ENCODE measurements at regions of chr11 and their contacts with region 1.

Region 1: GRCh38 chr11:72793425-72794367 is at the start of gene STARD10:
- DNase-seq: peak; percentile 89 to 92
- ATAC-seq: peak; percentile 92 to 93
- H3K4me3 ChIP-seq: peak within 1 kb of the TSS; percentile 64 to 86 (median 75)
- H3K27ac ChIP-seq: peak within 1 kb of the TSS; percentile 87 to 98 (median 96)
- H3K4me1 ChIP-seq: peaks cover 20 to 29% of the 10 kb centered on the region in 2 donors
- H3K27me3 ChIP-seq: no peaks in the 10 kb centered on the region
- CTCF ChIP-seq: peak; percentile 98 to 100 (median 99)
- POLR2A ChIP-seq: peak in 1 of 2 donors; percentile 69
- total RNA-seq, gene STARD10: 39.1 to 103 (median 71.1) TPM

Region 2: GRCh38 chr11:72752088-72752914 is 41.4 kb before region 1 on chr11 and contains the start of gene ARAP1:
- in situ Hi-C with region 1: no loop called
- intact Hi-C with region 1: loop called (anchors 1 kb)
- DNase-seq: peak; percentile 46 to 66
- ATAC-seq: peak; percentile 86 to 87
- H3K4me3 ChIP-seq: peak within 1 kb of the TSS; percentile 64 to 78 (median 70)
- H3K27ac ChIP-seq: peak within 1 kb of the TSS; percentile 53 to 83 (median 76)
- H3K4me1 ChIP-seq: peaks cover 12 to 18% of the 10 kb centered on the region in 2 donors
- H3K27me3 ChIP-seq: no peaks in the 10 kb centered on the region
- CTCF ChIP-seq: no peak
- POLR2A ChIP-seq: peak in 1 of 2 donors; percentile 37
- total RNA-seq, gene ARAP1: 18.3 to 52.0 (median 26.0) TPM

Region 3: GRCh38 chr11:72772978-72773690 is 20.6 kb before region 1 on chr11:
- in situ Hi-C with region 1: no loop called
- intact Hi-C with region 1: loop called (anchors 1 kb)
- DNase-seq: peak; percentile 59 to 78
- ATAC-seq: peak; percentile 96 to 98
- H3K4me3 ChIP-seq: no peak overlapping the region
- H3K27ac ChIP-seq: peak overlapping the region; percentile 66 to 80 (median 76)
- H3K4me1 ChIP-seq: peaks cover 24 to 26% of the 10 kb centered on the region in 2 donors
- H3K27me3 ChIP-seq: no peaks in the 10 kb centered on the region
- CTCF ChIP-seq: no peak
- POLR2A ChIP-seq: no peak

Region 4: DNA sequence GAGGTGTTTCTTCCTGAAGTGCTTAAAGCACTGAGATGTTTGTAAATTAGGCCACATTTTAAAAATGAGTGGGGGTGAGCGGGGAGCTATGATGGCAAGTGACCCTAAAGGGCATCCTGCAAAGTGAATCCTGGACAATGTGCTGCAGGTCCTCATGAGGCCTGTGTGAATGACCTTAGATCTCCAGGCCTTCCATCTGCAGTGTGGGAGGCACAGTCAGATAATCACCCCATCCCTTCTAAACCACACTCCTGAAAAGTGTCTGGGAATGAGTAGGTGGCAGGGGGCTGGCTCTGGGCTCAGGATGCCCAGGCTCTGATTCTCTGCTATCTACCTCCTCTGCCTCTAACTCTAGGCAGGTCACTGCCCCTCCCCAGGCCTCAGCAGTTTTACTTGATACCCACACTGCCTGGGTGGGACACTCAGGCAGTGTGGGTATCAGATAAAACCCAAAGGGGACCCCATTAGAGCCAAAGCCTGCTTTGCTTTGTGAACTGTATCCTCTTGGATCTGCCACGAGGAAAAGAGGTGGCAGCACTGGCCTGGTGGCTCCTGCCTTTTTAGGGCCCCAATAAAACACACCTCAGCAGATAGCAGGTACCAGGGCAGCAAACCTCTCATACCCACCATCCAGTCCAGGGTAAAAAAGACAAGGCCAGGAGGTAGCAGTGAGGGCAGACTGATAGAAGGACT is 10.4 kb before region 1 on chr11:
- in situ Hi-C with region 1: no loop called
- intact Hi-C with region 1: no loop called
- DNase-seq: no peak
- ATAC-seq: no peak
- H3K4me3 ChIP-seq: no peak overlapping the region
- H3K27ac ChIP-seq: no peak overlapping the region
- H3K4me1 ChIP-seq: peaks cover 10 to 15% of the 10 kb centered on the region in 2 donors
- H3K27me3 ChIP-seq: no peaks in the 10 kb centered on the region
- CTCF ChIP-seq: no peak
- POLR2A ChIP-seq: no peak

Region 5: GRCh38 chr11:72814286-72815109 is 20.8 kb after region 1 on chr11 and contains the start of gene ATG16L2:
- in situ Hi-C with region 1: no loop called
- intact Hi-C with region 1: loop called (anchors 1 kb)
- DNase-seq: peak; percentile 71 to 78
- ATAC-seq: peak; percentile 88 to 90
- H3K4me3 ChIP-seq: peak within 1 kb of the TSS; percentile 75 to 100 (median 94)
- H3K27ac ChIP-seq: peak within 1 kb of the TSS; percentile 88 to 100 (median 94)
- H3K4me1 ChIP-seq: peaks cover 13 to 26% of the 10 kb centered on the region in 2 donors
- H3K27me3 ChIP-seq: no peaks in the 10 kb centered on the region
- CTCF ChIP-seq: peak; percentile 7 to 69 (median 33)
- POLR2A ChIP-seq: peak; percentile 65 to 70
- total RNA-seq, gene ATG16L2: 3.1 to 8.1 (median 4.3) TPM

Region 6: DNA sequence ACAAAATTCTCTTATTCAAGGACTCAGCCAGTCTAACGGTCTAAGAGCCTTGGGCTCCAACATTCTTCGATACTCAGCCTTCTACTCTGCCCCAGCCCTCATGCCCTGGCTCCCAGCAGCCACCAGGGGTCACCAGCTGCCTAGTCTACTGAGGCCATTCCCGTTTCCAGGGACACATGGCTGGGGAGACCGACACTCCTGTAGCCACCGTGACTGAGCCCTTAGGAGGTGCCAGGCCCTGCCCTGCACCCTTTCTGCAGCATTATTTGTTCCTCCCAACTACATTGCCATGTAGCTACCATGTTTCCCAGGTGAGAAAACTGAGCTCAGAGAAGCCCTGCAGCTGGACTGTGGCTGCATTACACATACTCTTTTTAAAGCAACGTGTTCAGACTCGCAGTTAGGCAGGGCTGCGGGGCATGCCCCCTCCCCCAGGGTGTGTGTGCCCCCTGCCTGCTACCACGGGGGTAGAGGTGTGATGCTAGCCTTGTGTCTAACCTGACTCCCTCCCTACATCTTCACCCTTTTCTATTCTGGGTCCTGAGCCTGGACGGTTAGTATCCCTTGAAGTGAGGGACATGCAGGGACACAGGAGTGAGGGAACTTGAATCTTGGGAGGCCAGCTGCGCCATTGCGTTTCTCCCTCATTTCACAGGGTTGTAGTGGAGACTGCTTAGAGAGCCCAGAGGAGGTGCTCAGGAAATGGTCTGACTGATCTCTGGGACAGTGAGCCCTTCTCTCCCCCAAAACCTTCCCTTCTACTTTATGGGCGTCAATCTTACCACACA is 38.0 kb after region 1 on chr11:
- in situ Hi-C with region 1: no loop called
- intact Hi-C with region 1: no loop called
- DNase-seq: peak; percentile 64 to 82
- ATAC-seq: peak; percentile 79 to 91
- H3K4me3 ChIP-seq: no peak overlapping the region
- H3K27ac ChIP-seq: peak overlapping the region; percentile 69 to 85 (median 80)
- H3K4me1 ChIP-seq: peaks cover 31 to 50% of the 10 kb centered on the region in 2 donors
- H3K27me3 ChIP-seq: no peaks in the 10 kb centered on the region
- CTCF ChIP-seq: peak; percentile 94 to 97 (median 96)
- POLR2A ChIP-seq: no peak